Activated T-helper 2 cell treated with anti-CD3 and anti-CD28 coated beads, Interferon-gamma antibody, Interleukin-2, Interleukin-4, amounts not matched to agents 10 μg/mL and 5 μg/mL and 100 μg/mL, durations not matched to agents 14 hours and 24 hours and 36 hours (primary cell): ENCODE measurements at regions of chr6 and their contacts with region 1.

Region 1: DNA sequence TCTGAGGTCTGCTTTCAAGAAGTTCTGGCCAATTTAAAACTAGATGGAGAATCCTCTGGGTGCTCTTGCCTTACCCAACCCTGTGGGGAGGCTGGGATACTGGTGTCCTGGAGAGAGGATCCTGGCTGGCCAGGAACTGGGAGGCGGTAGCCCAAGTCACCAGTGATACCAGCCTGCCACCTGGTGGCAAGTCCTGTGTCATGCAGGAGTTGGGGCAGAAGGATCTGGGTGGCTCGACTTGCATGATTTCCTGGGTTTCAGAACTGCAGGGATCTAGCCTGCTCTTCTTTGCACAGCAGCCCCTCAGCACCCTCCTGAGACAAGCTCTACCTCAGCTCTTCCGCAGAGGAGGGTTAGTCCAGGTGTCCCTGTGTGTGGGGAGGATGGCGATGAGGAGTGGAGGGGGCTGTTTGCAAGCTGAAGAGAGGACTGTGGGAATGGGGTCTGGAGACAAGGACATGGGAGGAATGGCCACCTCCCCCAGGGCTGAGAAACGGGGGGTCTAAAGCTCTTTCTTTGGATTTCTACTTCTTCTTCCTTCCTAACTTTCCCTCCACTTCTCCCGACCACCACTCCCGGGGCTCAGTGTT is 4.2 kb downstream of the KCNK17 start:
- DNase-seq: peak; percentile 44
- H3K4me3 Mint-ChIP-seq: no peak overlapping the region
- H3K27ac Mint-ChIP-seq: no peak overlapping the region
- H3K4me1 Mint-ChIP-seq: peaks cover 2% of the 10 kb centered on the region
- H3K27me3 Mint-ChIP-seq: peaks cover 40% of the 10 kb centered on the region

Region 2: DNA sequence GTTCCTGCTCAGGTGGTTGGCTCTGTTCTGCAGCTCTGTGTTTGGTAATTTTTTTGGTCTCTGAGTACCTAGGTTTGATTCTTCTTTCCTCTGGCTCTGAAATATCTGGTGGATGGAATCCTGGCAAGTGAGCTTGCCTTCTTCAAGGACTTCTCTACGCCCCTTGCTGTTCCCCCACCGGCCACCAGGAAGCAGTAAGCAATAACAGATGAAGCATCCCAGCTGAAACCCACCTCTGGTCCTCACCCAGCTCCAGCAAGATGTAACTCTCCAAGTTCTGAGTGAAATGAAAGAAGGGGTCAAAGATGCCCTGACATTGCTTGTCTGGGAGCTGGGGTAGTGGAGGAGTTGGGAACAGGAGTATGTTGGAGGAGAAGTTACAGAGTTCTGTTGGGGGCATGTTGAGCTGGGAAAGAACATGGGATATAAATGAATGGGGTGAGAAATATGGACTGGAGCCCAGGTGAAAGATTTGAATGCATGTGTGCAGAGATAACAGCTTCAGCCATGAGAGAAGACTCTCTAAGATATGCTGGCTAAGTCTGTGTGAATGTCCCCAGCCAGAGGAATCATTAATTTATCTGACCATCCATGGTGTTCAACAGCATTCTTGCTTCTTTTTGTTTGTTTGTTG is 312.8 kb before region 1 on chr6:
- intact Hi-C with region 1: loop called (anchors 5 kb)
- DNase-seq: no peak
- H3K4me3 Mint-ChIP-seq: no peak overlapping the region
- H3K27ac Mint-ChIP-seq: no peak overlapping the region
- H3K4me1 Mint-ChIP-seq: no peaks in the 10 kb centered on the region
- H3K27me3 Mint-ChIP-seq: peaks cover 42% of the 10 kb centered on the region

Region 3: DNA sequence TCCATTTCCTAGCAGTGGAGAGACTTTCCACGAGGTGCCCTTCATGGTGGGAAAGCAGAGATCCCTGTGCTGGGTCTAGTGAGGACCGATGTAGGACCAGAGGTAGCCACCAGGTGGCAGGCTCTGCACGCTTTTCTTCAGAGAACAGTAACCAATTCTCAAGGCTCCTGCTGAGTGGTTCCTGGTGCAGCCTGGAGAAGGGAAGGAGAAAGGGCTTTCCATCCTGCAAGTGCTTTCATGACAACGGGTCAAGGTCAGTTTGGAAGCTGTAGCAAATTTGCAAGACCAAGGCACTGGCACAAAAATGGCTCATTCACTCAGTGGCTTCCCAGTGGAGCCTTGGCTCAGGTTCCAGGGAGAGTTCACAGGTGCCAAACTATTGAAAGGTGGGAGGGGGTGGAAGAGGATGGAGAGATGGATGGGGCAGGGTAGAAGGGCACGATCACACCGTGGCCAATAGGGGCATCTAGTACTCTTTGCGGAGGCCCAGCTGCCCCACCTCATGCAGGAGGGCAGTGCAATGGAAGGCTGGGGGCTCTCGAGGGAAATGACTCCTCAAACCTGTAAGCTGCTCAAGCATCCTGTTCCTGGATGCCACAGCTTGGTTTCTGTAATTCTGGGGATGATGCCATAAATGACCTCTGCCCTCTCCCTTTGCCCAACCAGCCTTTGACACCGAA is 38.0 kb after region 1 on chr6:
- intact Hi-C with region 1: no loop called
- DNase-seq: peak; percentile 43
- H3K4me3 Mint-ChIP-seq: no peak overlapping the region
- H3K27ac Mint-ChIP-seq: no peak overlapping the region
- H3K4me1 Mint-ChIP-seq: no peaks in the 10 kb centered on the region
- H3K27me3 Mint-ChIP-seq: no peaks in the 10 kb centered on the region

Region 4: DNA sequence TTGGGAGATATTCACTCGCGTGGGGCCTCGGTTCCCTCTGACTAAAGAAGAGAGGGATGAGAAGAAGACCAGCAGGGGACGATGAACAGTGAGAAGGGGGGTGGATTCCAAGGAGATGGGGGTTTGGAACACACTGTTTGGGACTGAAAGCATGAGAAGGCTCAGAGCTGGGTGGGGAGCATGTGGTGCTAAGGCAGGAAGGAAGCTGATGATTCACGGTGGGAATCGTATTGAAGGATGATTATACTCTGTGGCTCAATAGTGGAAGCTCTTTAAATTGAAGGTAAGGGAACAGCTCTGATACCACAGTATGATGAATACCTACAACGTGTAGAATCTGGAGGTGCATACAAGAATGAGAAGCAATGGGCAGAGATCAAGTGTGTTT is 130.0 kb after region 1 on chr6:
- intact Hi-C with region 1: no loop called
- DNase-seq: no peak
- H3K4me3 Mint-ChIP-seq: no peak overlapping the region
- H3K27ac Mint-ChIP-seq: no peak overlapping the region
- H3K4me1 Mint-ChIP-seq: no peaks in the 10 kb centered on the region
- H3K27me3 Mint-ChIP-seq: no peaks in the 10 kb centered on the region